GM10248 (cell line): ENCODE measurements at regions of chr6 and their contacts with region 1.

Region 1: DNA sequence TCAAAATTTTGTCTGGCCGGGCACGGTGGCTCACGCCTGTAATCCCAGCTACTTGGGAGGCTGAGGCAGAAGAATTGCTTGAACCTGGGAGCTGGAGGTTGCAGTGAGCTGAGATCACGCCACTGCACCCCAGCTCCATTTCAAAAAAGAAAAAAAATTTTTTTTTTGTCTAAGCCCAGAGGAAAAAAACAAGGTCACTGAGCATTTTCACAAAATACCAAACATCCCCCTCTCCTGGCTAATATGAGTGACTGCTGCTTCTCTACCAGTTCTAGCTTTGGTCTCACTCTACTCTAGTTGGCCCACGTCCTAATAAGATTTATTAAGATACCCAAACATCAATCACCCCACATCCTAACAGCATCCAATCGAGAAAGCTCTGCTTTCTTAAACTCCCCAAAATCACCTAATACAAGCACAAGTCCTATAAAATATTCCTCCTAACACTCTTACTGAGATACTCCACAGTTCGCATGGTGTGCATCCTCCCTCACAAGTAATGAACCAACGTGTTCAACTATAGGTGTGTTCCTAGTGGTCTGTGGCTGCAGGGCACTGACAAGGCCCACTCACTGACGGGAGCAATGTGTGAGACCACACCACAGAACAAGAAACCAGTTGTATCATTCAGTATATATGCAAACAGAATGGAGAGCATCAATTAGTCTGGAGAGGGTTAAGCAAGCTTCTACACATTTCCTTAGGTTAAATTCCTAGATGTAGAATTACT is 64.2 kb downstream of the FKBP5 start:
- DNase-seq: no peak
- CTCF ChIP-seq: no peak

Region 2: DNA sequence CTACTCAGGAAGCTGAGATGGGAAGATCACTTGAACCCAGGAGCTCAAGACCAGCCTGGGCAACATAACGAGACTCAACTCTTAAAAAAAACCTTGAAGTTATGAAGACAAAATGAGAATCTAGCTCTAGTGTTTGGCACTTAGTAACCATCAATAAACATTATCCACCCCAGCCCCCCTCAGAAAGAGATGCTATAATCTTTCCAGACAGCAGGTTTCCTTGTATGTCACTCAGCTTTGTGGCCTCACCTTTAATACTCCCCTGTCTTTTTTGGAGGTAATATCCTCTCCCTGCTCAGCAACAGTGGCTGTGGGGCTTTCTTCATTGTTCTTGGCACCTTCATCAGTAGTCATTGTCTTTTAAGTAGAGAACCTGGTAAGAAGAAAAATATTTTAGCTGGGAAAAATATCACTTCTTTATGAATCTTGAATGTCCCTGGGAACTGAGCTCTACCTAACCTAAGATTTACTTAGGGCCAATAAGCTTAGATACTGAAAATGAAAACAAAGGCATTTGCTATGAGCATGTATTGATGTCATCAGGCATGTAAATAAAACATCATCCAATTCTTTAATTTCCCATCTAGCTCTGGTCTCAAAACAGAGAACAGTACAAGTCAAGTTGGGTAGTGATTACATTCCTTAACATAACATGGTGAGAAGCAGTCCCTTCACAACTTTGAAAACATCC is 18.1 kb after region 1 on chr6:
- CTCF ChIA-PET with region 1: interaction called, 10 read pairs
- POLR2A ChIA-PET with region 1: no interaction called
- DNase-seq: no peak
- CTCF ChIP-seq: no peak